ENCODE measurements at regions of chr11 and their contacts with region 1.

Region 1: GRCh38 chr11:47176328-47177228 is at the start of gene ARFGAP2:
- DNase-seq: peak; percentile 97
- H3K4me3 Mint-ChIP-seq: peak within 1 kb of the TSS; percentile 97
- H3K27ac Mint-ChIP-seq: peak within 1 kb of the TSS; percentile 99
- H3K4me1 Mint-ChIP-seq: peaks cover 41% of the 10 kb centered on the region
- H3K27me3 Mint-ChIP-seq: no peaks in the 10 kb centered on the region
- total RNA-seq, gene ARFGAP2: 75.1 to 78.7 TPM

Region 2: DNA sequence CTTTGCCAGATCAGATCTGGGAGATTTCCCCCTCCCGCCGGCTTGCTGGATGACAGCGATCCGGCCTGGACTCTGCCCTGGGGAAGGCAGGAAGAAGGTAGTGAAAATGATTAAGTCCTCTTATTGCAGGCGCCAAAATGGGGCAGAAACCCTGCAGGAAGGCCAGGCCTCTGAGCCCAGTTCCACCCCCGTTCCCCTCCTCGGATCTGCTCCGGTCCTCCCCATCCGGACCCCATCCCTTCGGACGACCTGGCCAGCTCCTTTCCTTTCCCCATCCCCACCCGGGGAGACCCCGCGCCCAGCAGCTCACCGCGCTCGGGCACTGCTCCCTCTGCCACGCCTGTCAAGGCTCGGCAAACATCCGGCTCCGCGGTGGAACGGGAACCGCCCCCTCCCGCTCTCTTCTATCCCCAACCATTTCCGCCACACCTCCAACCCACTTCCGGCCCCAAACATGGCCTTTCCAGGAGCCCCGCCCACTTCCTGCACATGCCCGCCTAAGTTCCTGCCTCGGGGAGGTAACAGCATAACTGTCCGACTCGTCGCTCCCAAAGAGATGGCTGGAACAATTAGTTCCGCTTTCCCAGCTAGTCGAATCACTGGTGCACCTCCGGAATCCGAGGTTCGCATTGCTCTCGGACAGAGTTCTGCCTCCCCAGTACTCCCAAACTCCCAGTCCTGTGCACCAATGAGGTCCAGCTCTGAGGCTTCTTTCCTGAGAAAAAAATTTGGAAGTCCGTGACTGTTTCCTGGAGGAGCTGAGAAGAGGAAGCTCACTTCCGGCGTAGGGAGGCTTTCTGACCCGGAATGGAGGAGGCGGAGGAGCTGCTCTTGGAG is 476.1 kb before region 1 on chr11 and contains the starts of genes ARHGAP1 and ZNF408:
- CTCF ChIA-PET with region 1: no interaction called
- intact Hi-C with region 1: loop called (anchors 2 kb)
- DNase-seq: peak; percentile 100
- H3K4me3 Mint-ChIP-seq: peak within 1 kb of the TSS; percentile 97
- H3K27ac Mint-ChIP-seq: peak within 1 kb of the TSS; percentile 97
- H3K4me1 Mint-ChIP-seq: peaks cover 45% of the 10 kb centered on the region
- H3K27me3 Mint-ChIP-seq: no peaks in the 10 kb centered on the region
- total RNA-seq, gene ARHGAP1: 31.2 to 32.6 TPM
- total RNA-seq, gene ZNF408: 7.3 to 7.6 TPM

Region 3: DNA sequence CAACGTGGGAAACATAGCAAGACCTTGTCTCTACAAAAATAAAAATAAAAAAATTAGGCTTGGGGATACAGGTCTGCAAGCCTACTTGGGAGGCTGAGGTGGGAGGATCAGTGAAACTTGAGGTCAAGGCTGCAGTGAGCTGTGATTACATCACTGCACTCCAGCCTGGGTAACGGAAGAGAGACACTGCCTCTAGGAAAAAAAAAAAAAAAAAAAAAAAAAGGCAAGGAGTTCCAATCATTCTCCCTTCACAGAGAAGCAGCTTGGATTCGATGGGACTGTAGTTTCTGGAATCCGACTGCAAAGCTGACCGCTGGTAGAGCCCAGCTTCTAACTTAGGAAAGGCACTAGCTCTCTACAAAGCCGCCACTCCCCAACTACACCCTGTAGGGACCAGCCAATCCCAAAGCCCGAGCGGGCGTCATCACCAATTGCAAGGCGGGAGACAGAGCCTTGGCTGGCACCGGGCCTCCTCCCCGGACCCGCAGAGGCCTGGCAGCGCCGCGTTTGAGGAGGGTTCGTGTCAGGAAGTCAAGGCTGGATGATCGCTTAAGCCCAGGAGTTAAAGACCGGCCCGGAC is 37.5 kb after region 1 on chr11:
- CTCF ChIA-PET with region 1: interaction called, 15 read pairs
- intact Hi-C with region 1: loop called (anchors 1 kb)
- DNase-seq: peak; percentile 95
- H3K4me3 Mint-ChIP-seq: peak overlapping the region; percentile 87
- H3K27ac Mint-ChIP-seq: peak overlapping the region; percentile 97
- H3K4me1 Mint-ChIP-seq: peaks cover 30% of the 10 kb centered on the region
- H3K27me3 Mint-ChIP-seq: no peaks in the 10 kb centered on the region

Region 4: DNA sequence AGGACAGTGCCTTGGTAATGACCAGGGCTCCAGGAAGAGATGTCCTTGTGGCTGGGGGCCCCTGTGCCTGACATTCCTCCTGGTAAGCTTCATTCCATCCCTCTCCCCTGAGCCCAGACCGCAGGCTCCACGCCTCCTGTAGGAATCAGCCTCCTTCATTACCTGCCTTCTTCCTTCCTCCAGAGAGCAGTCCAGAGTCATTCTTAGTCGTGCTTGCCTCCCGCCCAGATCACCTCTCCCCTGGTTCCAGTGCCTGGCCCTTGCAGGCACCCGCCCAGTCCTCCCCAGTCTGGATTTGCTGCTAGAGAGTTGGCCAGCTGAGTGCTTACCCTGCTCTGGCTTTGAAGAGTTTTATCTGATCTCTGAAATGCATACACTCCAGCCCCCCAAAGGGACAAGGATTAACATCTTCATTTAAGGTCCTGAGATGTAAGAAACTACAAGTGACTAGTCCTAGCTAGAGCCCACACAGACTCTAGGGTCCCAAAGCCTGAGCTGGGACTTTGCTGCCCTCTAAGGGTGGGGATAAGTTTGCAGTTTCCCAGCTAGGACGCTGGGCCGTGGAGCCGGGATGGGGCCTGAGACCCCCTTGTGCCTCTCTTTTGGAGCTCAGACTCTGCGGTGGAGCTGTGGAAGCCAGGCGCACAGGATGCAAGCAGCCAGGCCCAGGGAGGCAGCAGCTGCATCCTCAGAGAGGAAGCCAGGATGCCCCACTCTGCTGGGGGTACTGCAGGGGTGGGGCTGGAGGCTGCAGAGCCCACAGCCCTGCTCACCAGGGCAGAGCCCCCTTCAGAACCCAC is 82.8 kb after region 1 on chr11:
- CTCF ChIA-PET with region 1: interaction called, 56 read pairs
- intact Hi-C with region 1: loop called (anchors 2 kb)
- DNase-seq: peak; percentile 40
- H3K4me3 Mint-ChIP-seq: no peak overlapping the region
- H3K27ac Mint-ChIP-seq: no peak overlapping the region
- H3K4me1 Mint-ChIP-seq: peaks cover 8% of the 10 kb centered on the region
- H3K27me3 Mint-ChIP-seq: no peaks in the 10 kb centered on the region

Region 5: DNA sequence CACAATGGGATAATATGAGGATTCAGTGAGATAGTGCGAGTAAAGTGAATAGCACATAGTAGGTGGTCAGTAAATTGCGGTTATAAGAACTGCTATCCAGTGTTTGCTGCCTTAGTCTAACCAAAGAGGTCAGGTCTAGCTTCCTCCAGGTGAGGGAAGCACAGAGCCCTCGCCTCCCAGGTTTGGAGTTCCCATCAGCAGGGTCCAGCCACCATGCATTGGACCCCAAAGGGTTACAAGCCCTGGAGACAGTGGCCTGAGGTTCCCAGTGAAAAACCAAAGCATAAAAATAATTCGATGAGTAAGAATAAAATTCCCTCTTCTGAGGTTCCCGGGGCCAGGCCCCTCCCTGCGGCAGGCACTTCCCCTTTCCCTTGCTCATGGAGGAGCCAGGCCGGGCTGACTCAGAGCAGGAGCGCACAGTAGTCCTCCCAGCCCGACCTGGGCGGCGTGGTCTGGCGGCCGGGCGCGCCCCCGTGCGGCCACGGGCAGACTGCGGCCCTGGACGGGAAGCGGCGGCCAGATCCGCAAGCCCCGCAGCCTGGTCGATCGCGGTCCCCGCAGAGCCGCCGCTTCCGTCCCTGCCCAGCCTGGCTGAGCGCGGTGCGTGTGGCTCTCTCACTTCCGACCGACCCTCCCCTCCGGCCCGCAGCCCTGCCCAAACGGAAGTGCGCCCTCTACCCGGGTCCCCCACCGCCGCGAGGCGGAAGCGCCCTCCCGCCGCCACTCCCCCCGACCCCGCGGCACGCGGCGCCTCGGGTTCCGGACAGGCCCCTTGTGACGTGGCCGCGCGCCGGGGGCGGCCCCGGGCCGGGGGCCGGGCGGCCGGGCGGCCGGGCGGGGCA is 231.4 kb after region 1 on chr11 and contains the start of gene SLC39A13:
- CTCF ChIA-PET with region 1: interaction called, 5 read pairs
- intact Hi-C with region 1: loop called (anchors 1 kb)
- DNase-seq: peak; percentile 91
- H3K4me3 Mint-ChIP-seq: peak within 1 kb of the TSS; percentile 92
- H3K27ac Mint-ChIP-seq: peak within 1 kb of the TSS; percentile 92
- H3K4me1 Mint-ChIP-seq: peaks cover 25% of the 10 kb centered on the region
- H3K27me3 Mint-ChIP-seq: no peaks in the 10 kb centered on the region
- total RNA-seq, gene SLC39A13: 9.2 TPM

Region 6: DNA sequence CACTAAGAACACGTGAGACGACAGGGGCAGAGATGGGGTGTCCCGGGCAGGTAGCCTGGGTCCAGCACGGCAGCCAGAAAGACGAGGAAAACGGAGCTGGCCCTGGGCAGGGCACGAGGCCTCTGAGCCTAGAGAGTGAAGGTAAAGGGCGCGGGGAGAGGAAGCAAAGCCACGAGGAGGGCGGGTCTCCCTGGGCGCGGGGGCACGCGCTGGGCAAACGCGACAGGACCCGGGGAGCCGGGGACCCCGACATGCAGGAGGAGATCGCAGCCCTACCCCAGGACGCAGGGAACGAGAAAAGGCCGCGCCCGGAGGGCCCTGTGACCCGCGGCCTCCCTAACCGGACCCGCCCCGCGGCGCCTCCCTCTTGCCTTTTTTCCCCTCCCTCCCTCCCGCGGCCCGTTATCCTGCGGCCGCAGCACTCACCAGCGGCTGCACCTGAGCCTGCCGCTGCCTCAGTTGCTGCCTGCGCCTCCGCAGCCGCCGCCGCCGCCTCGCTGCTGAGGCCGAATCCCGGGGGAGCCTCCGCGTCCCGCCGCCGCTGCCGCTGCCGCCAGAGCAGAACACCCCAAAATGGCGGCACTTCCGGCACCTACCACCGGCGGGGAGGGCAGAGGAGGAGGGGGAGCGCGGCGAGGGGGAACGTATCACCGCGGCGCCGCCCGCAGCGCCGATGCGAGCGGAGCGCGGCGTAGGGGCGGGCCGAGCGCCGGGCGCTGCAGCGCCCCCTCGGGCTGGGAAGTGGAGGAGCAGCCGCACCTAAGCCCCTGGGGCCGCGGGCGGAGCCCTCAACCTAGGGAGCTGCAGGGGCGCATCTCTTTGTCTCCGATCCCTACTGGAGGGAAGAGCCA is 376.2 kb after region 1 on chr11 and contains the start of gene CELF1:
- CTCF ChIA-PET with region 1: no interaction called
- intact Hi-C with region 1: loop called (anchors 5 kb)
- DNase-seq: peak; percentile 95
- H3K4me3 Mint-ChIP-seq: peak within 1 kb of the TSS; percentile 97
- H3K27ac Mint-ChIP-seq: peak within 1 kb of the TSS; percentile 95
- H3K4me1 Mint-ChIP-seq: peaks cover 42% of the 10 kb centered on the region
- H3K27me3 Mint-ChIP-seq: no peaks in the 10 kb centered on the region
- total RNA-seq, gene CELF1: 104 to 105 TPM

Measured in activated naive CD4-positive, alpha-beta T cell treated with anti-CD3 and anti-CD28 coated beads for 36 hours (primary cell).